ENCODE measurements at regions of chr5 and their contacts with region 1.

Region 1: GRCh38 chr5:39578887-39579497 is 154.2 kb upstream of the DAB2 start:
- DNase-seq: peak in 2 of 9 experiments; percentile 36 to 52
- ATAC-seq: no peak
- H3K4me3 ChIP-seq: no peak overlapping the region
- H3K4me3 Mint-ChIP-seq: no peak overlapping the region
- H3K27ac ChIP-seq: no peak overlapping the region
- H3K27ac Mint-ChIP-seq: no peak overlapping the region
- H3K4me1 ChIP-seq: peaks cover 4% of the 10 kb centered on the region
- H3K4me1 Mint-ChIP-seq: peaks cover 6% of the 10 kb centered on the region
- H3K27me3 ChIP-seq: no peaks in the 10 kb centered on the region
- H3K27me3 Mint-ChIP-seq: peaks cover 5% of the 10 kb centered on the region
- CTCF ChIP-seq: peak; percentile 98

Region 2: DNA sequence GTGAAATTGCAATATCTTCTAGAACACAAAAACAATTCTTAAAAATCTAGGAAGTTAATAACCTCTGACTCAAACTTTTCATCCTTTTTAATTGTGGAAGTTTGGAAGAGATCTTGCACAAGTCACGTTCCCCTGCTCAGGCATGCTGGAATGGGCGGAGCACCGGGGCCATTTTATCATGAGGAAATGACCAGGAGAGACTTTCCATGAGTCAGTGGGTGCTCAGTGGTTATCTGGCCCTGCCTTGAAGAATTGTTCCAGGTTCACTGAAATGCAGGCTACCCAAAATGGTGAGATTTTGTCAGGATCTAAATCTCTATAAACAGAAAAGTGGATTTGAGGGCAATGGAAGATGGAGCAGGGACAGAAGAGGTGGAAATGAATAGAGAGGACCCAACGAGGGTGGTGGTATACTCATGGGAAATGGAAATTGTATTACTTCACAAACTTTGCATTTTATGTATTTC is 420.8 kb before region 1 on chr5:
- CTCF ChIA-PET with region 1: no interaction called
- POLR2A ChIA-PET with region 1: no interaction called
- intact Hi-C with region 1: no loop called
- DNase-seq: no peak
- ATAC-seq: no peak
- H3K4me3 ChIP-seq: no peak overlapping the region
- H3K4me3 Mint-ChIP-seq: peak overlapping the region; percentile 16
- H3K27ac ChIP-seq: no peak overlapping the region
- H3K27ac Mint-ChIP-seq: peak overlapping the region; percentile 86
- H3K4me1 ChIP-seq: peaks cover 83% of the 10 kb centered on the region
- H3K4me1 Mint-ChIP-seq: peaks cover 86% of the 10 kb centered on the region
- H3K27me3 ChIP-seq: no peaks in the 10 kb centered on the region
- H3K27me3 Mint-ChIP-seq: no peaks in the 10 kb centered on the region
- CTCF ChIP-seq: no peak

Region 3: DNA sequence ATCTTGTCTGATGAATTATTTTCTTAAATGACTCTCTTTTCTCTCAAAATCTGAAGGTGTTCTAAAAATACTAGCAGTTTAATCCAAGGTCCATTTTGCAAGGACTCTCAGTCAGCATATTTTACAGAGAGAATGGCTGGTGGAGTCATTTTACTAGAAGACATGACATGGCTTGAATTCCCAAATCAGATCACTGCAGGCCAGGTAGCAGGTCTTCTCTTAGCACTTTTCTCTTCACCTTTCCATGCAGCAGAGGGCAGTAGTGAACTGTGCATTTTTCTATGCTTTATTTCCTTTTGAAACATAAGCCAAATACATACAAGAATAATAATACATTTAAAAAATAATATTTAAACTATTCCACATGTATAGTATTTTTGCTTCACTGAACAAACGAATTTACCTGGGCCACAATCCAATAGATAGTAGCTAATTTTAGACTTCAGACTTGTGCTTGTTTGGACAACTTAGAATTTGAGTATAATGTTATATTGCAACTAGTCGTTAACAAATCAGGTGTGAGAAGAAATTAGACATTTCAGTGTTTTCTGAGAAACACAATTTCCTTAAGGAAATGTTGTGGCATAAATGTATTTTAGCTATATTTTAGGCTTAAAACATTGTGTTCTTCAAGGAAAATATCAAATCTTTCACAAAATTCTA is 135.2 kb after region 1 on chr5:
- CTCF ChIA-PET with region 1: no interaction called
- POLR2A ChIA-PET with region 1: no interaction called
- intact Hi-C with region 1: loop called in 1 of 2 experiments (anchors 2 kb)
- DNase-seq: peak in 6 of 9 experiments; percentile 1 to 66 (median 26)
- ATAC-seq: no peak
- H3K4me3 ChIP-seq: no peak overlapping the region
- H3K4me3 Mint-ChIP-seq: no peak overlapping the region
- H3K27ac ChIP-seq: no peak overlapping the region
- H3K27ac Mint-ChIP-seq: no peak overlapping the region
- H3K4me1 ChIP-seq: no peaks in the 10 kb centered on the region
- H3K4me1 Mint-ChIP-seq: no peaks in the 10 kb centered on the region
- H3K27me3 ChIP-seq: no peaks in the 10 kb centered on the region
- H3K27me3 Mint-ChIP-seq: peaks cover 9% of the 10 kb centered on the region
- CTCF ChIP-seq: peak; percentile 67